GM12878 (cell line): ENCODE measurements at regions of chr3 and their contacts with region 1.

Region 1: GRCh38 chr3:197186887-197187588 is 111.4 kb downstream of the DLG1 start:
- DNase-seq: peak; percentile 40
- ATAC-seq: peak; percentile 97
- H3K4me3 ChIP-seq: no peak overlapping the region
- H3K27ac ChIP-seq: no peak overlapping the region; the same call in 1 of the 2 replicates
- H3K4me1 ChIP-seq: peaks cover 8% of the 10 kb centered on the region; the same call in 1 of the 2 replicates
- H3K27me3 ChIP-seq: no peaks in the 10 kb centered on the region
- CTCF ChIP-seq: peak; percentile 72 to 84 (median 82)
- EP300 ChIP-seq: no peak
- POLR2A ChIP-seq: no peak
- RAD21 ChIP-seq: peak; percentile 86

Region 2: DNA sequence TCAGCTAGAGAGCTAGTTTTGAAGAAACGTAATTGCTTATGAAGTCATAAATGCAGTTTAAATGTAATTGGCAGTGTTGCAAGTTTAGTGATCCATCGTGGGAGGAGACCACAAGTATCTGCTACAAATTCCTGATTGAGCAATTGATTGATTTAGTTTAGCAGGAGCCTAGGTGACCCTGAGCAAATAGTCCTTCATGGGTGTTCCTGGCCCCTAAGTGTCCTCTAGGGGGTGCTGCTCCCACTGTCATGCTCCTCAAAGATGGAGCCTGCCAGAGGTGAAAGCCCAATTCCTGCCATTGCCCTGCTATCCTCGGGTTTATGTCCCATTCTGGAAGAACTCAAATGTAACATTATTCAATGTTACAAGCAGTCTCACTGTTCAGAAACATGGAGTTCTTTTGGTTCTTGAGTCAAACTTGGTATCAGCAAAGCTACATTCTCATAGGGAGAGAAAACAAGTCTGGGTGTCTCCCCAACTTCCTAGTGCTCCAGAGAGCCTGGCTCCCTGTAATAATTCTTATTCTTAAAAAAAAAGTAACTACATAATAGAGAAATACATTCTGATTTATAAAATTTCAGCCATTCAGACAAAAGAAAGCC is 349.1 kb before region 1 on chr3:
- CTCF ChIA-PET with region 1: interaction called, 4 read pairs
- POLR2A ChIA-PET with region 1: no interaction called
- RAD21 ChIA-PET with region 1: interaction called, 3 read pairs
- SMC1A ChIA-PET with region 1: interaction called, 3 read pairs
- in situ Hi-C with region 1: no loop called
- intact Hi-C with region 1: loop called (anchors 5 kb)
- DNase-seq: peak; percentile 20
- ATAC-seq: peak; percentile 96
- H3K4me3 ChIP-seq: no peak overlapping the region
- H3K27ac ChIP-seq: no peak overlapping the region
- H3K4me1 ChIP-seq: no peaks in the 10 kb centered on the region
- H3K27me3 ChIP-seq: no peaks in the 10 kb centered on the region
- CTCF ChIP-seq: peak; percentile 89 to 97 (median 94)
- EP300 ChIP-seq: no peak
- POLR2A ChIP-seq: no peak
- RAD21 ChIP-seq: peak; percentile 96

Region 3: GRCh38 chr3:197002701-197003454 is 184.2 kb before region 1 on chr3:
- CTCF ChIA-PET with region 1: interaction called, 35 read pairs
- POLR2A ChIA-PET with region 1: no interaction called
- RAD21 ChIA-PET with region 1: interaction called, 7 read pairs
- SMC1A ChIA-PET with region 1: interaction called, 5 read pairs
- in situ Hi-C with region 1: no loop called
- intact Hi-C with region 1: loop called (anchors 1 kb)
- DNase-seq: no peak
- ATAC-seq: peak; percentile 78
- H3K4me3 ChIP-seq: peak overlapping the region; percentile 71
- H3K27ac ChIP-seq: peak overlapping the region; percentile 70
- H3K4me1 ChIP-seq: peaks cover 9% of the 10 kb centered on the region
- H3K27me3 ChIP-seq: no peaks in the 10 kb centered on the region
- CTCF ChIP-seq: peak; percentile 48 to 76 (median 66); a peak in 5 of 6 replicates
- EP300 ChIP-seq: no peak
- POLR2A ChIP-seq: peak; percentile 49
- RAD21 ChIP-seq: peak; percentile 74

Region 4: GRCh38 chr3:197174927-197175326 is 12.1 kb before region 1 on chr3:
- CTCF ChIA-PET with region 1: interaction called, 12 read pairs
- POLR2A ChIA-PET with region 1: interaction called, 6 read pairs
- RAD21 ChIA-PET with region 1: interaction called, 4 read pairs
- SMC1A ChIA-PET with region 1: interaction called, 4 read pairs
- in situ Hi-C with region 1: no loop called
- intact Hi-C with region 1: no loop called
- DNase-seq: no peak
- ATAC-seq: peak; percentile 56
- H3K4me3 ChIP-seq: no peak overlapping the region; the same call in 1 of the 2 replicates
- H3K27ac ChIP-seq: peak overlapping the region; percentile 56
- H3K4me1 ChIP-seq: peaks cover 11% of the 10 kb centered on the region; the same call in 1 of the 2 replicates
- H3K27me3 ChIP-seq: no peaks in the 10 kb centered on the region
- CTCF ChIP-seq: no peak
- EP300 ChIP-seq: no peak
- POLR2A ChIP-seq: no peak
- RAD21 ChIP-seq: no peak

Region 5: DNA sequence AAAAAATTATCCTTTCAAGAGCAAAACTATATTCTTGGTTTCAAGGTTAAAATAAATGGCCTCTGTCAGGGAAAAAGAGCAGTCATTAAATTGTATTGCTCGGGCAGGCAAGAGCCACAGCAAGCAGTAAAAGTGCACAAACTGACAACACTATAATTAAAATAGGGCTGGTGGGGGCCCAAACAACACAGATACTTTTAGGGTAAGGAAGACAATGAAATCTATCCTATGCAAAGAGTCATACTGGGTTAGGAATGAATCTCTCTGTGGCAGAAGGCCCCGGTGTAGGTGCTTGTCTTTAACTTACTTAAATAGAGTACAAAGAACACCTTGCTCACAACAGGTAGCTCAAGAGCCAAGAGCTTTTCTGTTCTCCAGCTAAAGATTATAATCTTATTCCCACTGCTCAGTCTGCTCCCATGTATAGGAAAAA is 16.7 kb after region 1 on chr3:
- CTCF ChIA-PET with region 1: interaction called, 24 read pairs
- POLR2A ChIA-PET with region 1: no interaction called
- RAD21 ChIA-PET with region 1: interaction called, 4 read pairs
- SMC1A ChIA-PET with region 1: interaction called, 3 read pairs
- in situ Hi-C with region 1: no loop called
- intact Hi-C with region 1: no loop called
- DNase-seq: no peak
- ATAC-seq: peak; percentile 44
- H3K4me3 ChIP-seq: no peak overlapping the region
- H3K27ac ChIP-seq: no peak overlapping the region
- H3K4me1 ChIP-seq: no peaks in the 10 kb centered on the region
- H3K27me3 ChIP-seq: no peaks in the 10 kb centered on the region
- CTCF ChIP-seq: no peak
- EP300 ChIP-seq: no peak
- POLR2A ChIP-seq: no peak
- RAD21 ChIP-seq: no peak

Region 6: GRCh38 chr3:197445896-197446711 is 259.1 kb after region 1 on chr3:
- CTCF ChIA-PET with region 1: no interaction called
- POLR2A ChIA-PET with region 1: no interaction called
- RAD21 ChIA-PET with region 1: no interaction called
- SMC1A ChIA-PET with region 1: no interaction called
- in situ Hi-C with region 1: no loop called
- intact Hi-C with region 1: no loop called
- DNase-seq: no peak
- ATAC-seq: no peak
- H3K4me3 ChIP-seq: no peak overlapping the region
- H3K27ac ChIP-seq: no peak overlapping the region
- H3K4me1 ChIP-seq: no peaks in the 10 kb centered on the region
- H3K27me3 ChIP-seq: no peaks in the 10 kb centered on the region
- CTCF ChIP-seq: no peak
- EP300 ChIP-seq: no peak
- POLR2A ChIP-seq: no peak
- RAD21 ChIP-seq: no peak